ENCODE measurements at regions of chr1 and their contacts with region 1.

Region 1: DNA sequence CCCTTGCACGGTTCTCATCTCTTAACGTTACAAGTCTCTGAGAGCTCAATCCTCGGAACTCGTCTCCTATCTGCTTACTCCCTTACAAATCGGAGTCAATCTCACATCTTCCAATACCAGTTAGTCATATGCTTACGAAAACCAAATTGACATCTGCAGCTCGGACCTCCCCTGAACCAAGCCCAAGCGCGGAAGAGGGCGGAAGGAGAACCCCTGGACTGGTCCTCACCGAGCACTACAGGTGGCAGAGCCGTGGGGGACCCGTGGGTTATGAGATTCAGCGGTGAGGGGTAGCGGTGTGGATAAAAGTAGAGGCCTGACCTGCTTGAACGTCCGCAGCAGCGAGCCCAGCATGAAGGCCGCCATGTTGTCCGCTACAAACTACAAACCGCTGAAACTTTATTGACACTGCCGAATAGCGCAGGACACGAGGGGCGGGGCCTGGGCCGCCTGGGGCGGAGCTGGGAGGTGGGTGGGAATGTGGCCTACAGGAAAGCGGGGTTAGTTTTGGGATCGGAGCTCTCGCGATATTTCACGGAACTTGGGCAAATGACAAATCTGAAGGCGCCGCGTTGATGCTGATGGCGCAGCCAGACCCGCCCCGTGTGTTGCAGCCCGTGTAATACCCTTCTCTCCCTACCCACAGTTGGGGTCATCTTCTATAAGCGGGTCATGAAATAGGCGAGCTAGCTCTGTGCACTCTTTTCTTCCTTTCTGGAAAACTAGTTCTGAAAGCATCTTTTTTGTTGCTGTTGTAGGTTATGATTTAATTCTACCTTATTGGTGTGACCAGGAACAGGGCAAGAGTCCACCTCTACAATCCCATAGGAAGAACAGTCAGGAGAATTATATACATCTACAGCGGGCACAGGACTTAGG is at the start of gene MRPS14:
- DNase-seq: peak; percentile 99
- H3K4me3 ChIP-seq: peak within 1 kb of the TSS; percentile 96
- H3K27ac ChIP-seq: peak within 1 kb of the TSS; percentile 64
- H3K4me1 ChIP-seq: peaks cover 18% of the 10 kb centered on the region
- CTCF ChIP-seq: no peak
- total RNA-seq, gene MRPS14: 35.5 and 43.7 TPM in 2 replicates

Region 2: GRCh38 chr1:175005085-175005783 is 18.0 kb before region 1 on chr1:
- CTCF ChIA-PET with region 1: interaction called, 3 read pairs
- POLR2A ChIA-PET with region 1: interaction called, 27 read pairs
- intact Hi-C with region 1: loop called (anchors 2 kb)
- DNase-seq: no peak
- H3K4me3 ChIP-seq: no peak overlapping the region
- H3K27ac ChIP-seq: no peak overlapping the region
- H3K4me1 ChIP-seq: peaks cover 32% of the 10 kb centered on the region
- CTCF ChIP-seq: no peak

Region 3: GRCh38 chr1:175124861-175125260 is 101.6 kb after region 1 on chr1:
- CTCF ChIA-PET with region 1: interaction called, 12 read pairs
- POLR2A ChIA-PET with region 1: no interaction called
- intact Hi-C with region 1: no loop called
- DNase-seq: no peak
- H3K4me3 ChIP-seq: no peak overlapping the region
- H3K27ac ChIP-seq: no peak overlapping the region
- H3K4me1 ChIP-seq: peaks cover 14% of the 10 kb centered on the region
- CTCF ChIP-seq: no peak

Region 4: GRCh38 chr1:175338387-175339135 is 315.3 kb after region 1 on chr1:
- CTCF ChIA-PET with region 1: no interaction called
- POLR2A ChIA-PET with region 1: no interaction called
- intact Hi-C with region 1: loop called (anchors 5 kb)
- DNase-seq: peak; percentile 80
- H3K4me3 ChIP-seq: no peak overlapping the region
- H3K27ac ChIP-seq: no peak overlapping the region
- H3K4me1 ChIP-seq: no peaks in the 10 kb centered on the region
- CTCF ChIP-seq: peak; percentile 83

Region 5: GRCh38 chr1:176206961-176207902 is 1184.0 kb after region 1 on chr1 and contains the start of gene COP1:
- CTCF ChIA-PET with region 1: no interaction called
- POLR2A ChIA-PET with region 1: no interaction called
- intact Hi-C with region 1: loop called (anchors 10 kb)
- DNase-seq: peak; percentile 99
- H3K4me3 ChIP-seq: peak within 1 kb of the TSS; percentile 99
- H3K27ac ChIP-seq: peak within 1 kb of the TSS; percentile 94
- H3K4me1 ChIP-seq: peaks cover 30% of the 10 kb centered on the region
- CTCF ChIP-seq: 0 out of 2 replicates have a peak, but pooled peaks have one; percentile 8
- total RNA-seq, gene COP1: 75.2 and 78.2 TPM in 2 replicates